ENCODE measurements at regions of chr6 and their contacts with region 1.

Region 1: GRCh38 chr6:19804205-19805123 is 32.7 kb upstream of the ID4 start:
- DNase-seq: peak; percentile 95 to 97
- ATAC-seq: peak; percentile 99 to 100 (median 100)
- H3K4me3 ChIP-seq: peak overlapping the region; percentile 77
- H3K27ac ChIP-seq: peak overlapping the region; percentile 89
- H3K4me1 ChIP-seq: peaks cover 6% of the 10 kb centered on the region
- H3K27me3 ChIP-seq: no peaks in the 10 kb centered on the region
- CTCF ChIP-seq: no peak

Region 2: DNA sequence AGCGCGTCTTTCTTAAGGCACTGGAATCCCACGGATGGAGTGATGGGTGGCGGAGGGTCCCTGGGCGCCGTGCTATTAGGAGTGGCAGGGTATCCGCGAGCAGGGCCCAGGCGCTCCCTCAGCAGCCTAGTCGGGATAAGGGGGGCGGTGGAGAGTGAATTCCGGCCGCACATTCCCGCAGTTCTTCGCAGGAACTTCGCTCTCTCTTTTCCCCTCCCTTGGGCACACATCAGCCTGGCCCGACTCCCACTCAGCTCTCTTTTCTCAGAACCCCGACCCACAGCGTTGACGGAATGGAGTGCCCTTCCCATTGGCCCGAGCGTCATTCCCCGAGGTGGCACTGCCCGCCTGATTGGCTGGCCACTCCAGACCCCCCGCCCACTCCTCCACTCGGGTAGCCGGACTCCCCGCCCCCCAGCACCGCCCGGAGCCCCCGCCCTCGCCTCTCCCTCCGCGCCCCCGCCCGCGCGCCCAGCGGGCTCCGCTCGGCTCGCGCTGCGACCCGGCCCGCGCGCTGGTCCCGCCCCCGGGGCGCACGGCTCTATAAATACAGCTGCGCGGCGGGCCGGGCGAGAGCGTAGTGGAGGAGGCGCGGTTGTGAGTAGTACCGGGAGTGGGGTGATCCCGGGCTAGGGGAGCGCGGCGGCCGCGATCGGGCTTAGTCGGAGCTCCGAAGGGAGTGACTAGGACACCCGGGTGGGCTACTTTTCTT is 32.5 kb after region 1 on chr6 and contains the start of gene ID4:
- intact Hi-C with region 1: loop called in 1 of 2 experiments (anchors 5 kb)
- DNase-seq: peak; percentile 93 to 94
- ATAC-seq: peak; percentile 93 to 96 (median 94)
- H3K4me3 ChIP-seq: peak within 1 kb of the TSS; percentile 80
- H3K27ac ChIP-seq: peak within 1 kb of the TSS; percentile 65
- H3K4me1 ChIP-seq: peaks cover 5% of the 10 kb centered on the region
- H3K27me3 ChIP-seq: peaks cover 0 to 16% (median 3%) of the 10 kb centered on the region in 3 donors
- CTCF ChIP-seq: no peak
- total RNA-seq, gene ID4: 0.61 to 2.6 (median 1.7) TPM

Measured in psoas muscle (tissue), 8 donors.